ENCODE measurements at regions of chr11 and their contacts with region 1.

Region 1: GRCh38 chr11:10540923-10541560 is at the start of gene RNF141:
- DNase-seq: peak; percentile 89 to 94 (median 93)
- H3K4me3 ChIP-seq: peak within 1 kb of the TSS; percentile 50 to 77
- H3K4me3 Mint-ChIP-seq: peak within 1 kb of the TSS; percentile 87 to 95 (median 90)
- H3K27ac ChIP-seq: peak within 1 kb of the TSS; percentile 64
- H3K27ac Mint-ChIP-seq: peak within 1 kb of the TSS; percentile 87 to 95 (median 92)
- H3K4me1 ChIP-seq: peaks cover 9% of the 10 kb centered on the region
- H3K4me1 Mint-ChIP-seq: peaks cover 11 to 24% (median 18%) of the 10 kb centered on the region in 4 donors
- H3K27me3 ChIP-seq: no peaks in the 10 kb centered on the region
- H3K27me3 Mint-ChIP-seq: no peaks in the 10 kb centered on the region
- total RNA-seq, gene RNF141: 15.6 to 16.3 TPM

Region 2: GRCh38 chr11:10450464-10451425 is 90.3 kb before region 1 on chr11:
- CTCF ChIA-PET with region 1: interaction called, 52 read pairs
- POLR2A ChIA-PET with region 1: interaction called, 43 read pairs
- intact Hi-C with region 1: loop called (anchors 2 kb)
- DNase-seq: peak; percentile 56 to 67 (median 58)
- H3K4me3 ChIP-seq: peak overlapping the region; percentile 39 to 66
- H3K4me3 Mint-ChIP-seq: peak overlapping the region; percentile 91 to 98 (median 94)
- H3K27ac ChIP-seq: peak overlapping the region; percentile 76
- H3K27ac Mint-ChIP-seq: peak overlapping the region; percentile 93 to 97 (median 96)
- H3K4me1 ChIP-seq: peaks cover 45% of the 10 kb centered on the region
- H3K4me1 Mint-ChIP-seq: peaks cover 41 to 62% (median 50%) of the 10 kb centered on the region in 4 donors
- H3K27me3 ChIP-seq: no peaks in the 10 kb centered on the region
- H3K27me3 Mint-ChIP-seq: peaks cover 0 to 2% of the 10 kb centered on the region in 2 donors

Region 3: GRCh38 chr11:10514210-10514609 is 26.8 kb before region 1 on chr11:
- CTCF ChIA-PET with region 1: interaction called, 29 read pairs
- POLR2A ChIA-PET with region 1: interaction called, 3 read pairs
- intact Hi-C with region 1: no loop called
- DNase-seq: no peak
- H3K4me3 ChIP-seq: no peak overlapping the region
- H3K4me3 Mint-ChIP-seq: no peak overlapping the region
- H3K27ac ChIP-seq: no peak overlapping the region
- H3K27ac Mint-ChIP-seq: peak overlapping the region in 3 of 7 donors; percentile 8 to 89 (median 9)
- H3K4me1 ChIP-seq: no peaks in the 10 kb centered on the region
- H3K4me1 Mint-ChIP-seq: peaks cover 0 to 2% (median under 1%) of the 10 kb centered on the region in 4 donors
- H3K27me3 ChIP-seq: no peaks in the 10 kb centered on the region
- H3K27me3 Mint-ChIP-seq: no peaks in the 10 kb centered on the region

Region 4: GRCh38 chr11:10653926-10654810 is 113.1 kb after region 1 on chr11:
- CTCF ChIA-PET with region 1: interaction called, 13 read pairs
- POLR2A ChIA-PET with region 1: interaction called, 4 read pairs
- intact Hi-C with region 1: no loop called
- DNase-seq: peak in 4 of 5 donors; percentile 47 to 53 (median 50)
- H3K4me3 ChIP-seq: no peak overlapping the region
- H3K4me3 Mint-ChIP-seq: no peak overlapping the region
- H3K27ac ChIP-seq: no peak overlapping the region
- H3K27ac Mint-ChIP-seq: peak overlapping the region in 2 of 7 donors; percentile 16 to 41
- H3K4me1 ChIP-seq: no peaks in the 10 kb centered on the region
- H3K4me1 Mint-ChIP-seq: peaks cover 0 to 2% (median under 1%) of the 10 kb centered on the region in 4 donors
- H3K27me3 ChIP-seq: no peaks in the 10 kb centered on the region
- H3K27me3 Mint-ChIP-seq: no peaks in the 10 kb centered on the region

Measured in CD4-positive, alpha-beta memory T cell (primary cell).